ENCODE measurements at regions of chr18 and their contacts with region 1.

Region 1: GRCh38 chr18:12890506-12890905 is 6.5 kb upstream of the PTPN2 start:
- DNase-seq: no peak
- ATAC-seq: no peak
- H3K4me3 Mint-ChIP-seq: no peak overlapping the region
- H3K27ac Mint-ChIP-seq: no peak overlapping the region
- H3K4me1 Mint-ChIP-seq: peaks cover 16% of the 10 kb centered on the region
- H3K27me3 Mint-ChIP-seq: peaks cover 9% of the 10 kb centered on the region
- CTCF ChIP-seq: no peak

Region 2: DNA sequence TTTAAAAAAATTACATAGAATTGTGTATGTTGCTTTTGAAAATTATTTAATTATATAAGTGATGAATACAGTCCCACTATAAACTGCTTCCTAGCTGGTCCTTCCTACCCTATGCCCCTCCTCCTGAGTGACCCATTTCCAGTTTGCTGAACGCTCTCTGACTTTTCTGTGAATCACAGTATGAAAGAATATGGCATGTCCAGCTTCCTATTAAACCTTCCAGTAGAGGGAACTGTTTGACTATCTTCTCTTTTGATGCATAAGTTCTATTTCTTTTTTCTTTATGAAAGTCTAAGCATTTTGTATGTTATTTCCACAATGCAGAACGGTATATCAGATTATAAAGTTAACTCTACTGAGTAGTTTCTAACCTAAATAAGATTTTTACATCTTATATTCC is 146.4 kb before region 1 on chr18:
- CTCF ChIA-PET with region 1: interaction called, 21 read pairs
- POLR2A ChIA-PET with region 1: no interaction called
- intact Hi-C with region 1: no loop called
- DNase-seq: no peak
- ATAC-seq: peak; percentile 53
- H3K4me3 Mint-ChIP-seq: no peak overlapping the region
- H3K27ac Mint-ChIP-seq: no peak overlapping the region
- H3K4me1 Mint-ChIP-seq: no peaks in the 10 kb centered on the region
- H3K27me3 Mint-ChIP-seq: no peaks in the 10 kb centered on the region
- CTCF ChIP-seq: peak; percentile 64

Region 3: GRCh38 chr18:12904012-12904516 is 13.6 kb after region 1 on chr18:
- CTCF ChIA-PET with region 1: interaction called, 20 read pairs
- POLR2A ChIA-PET with region 1: no interaction called
- intact Hi-C with region 1: no loop called
- DNase-seq: peak; percentile 77
- ATAC-seq: peak; percentile 82
- H3K4me3 Mint-ChIP-seq: peak overlapping the region; percentile 48
- H3K27ac Mint-ChIP-seq: peak overlapping the region; percentile 60
- H3K4me1 Mint-ChIP-seq: peaks cover 4% of the 10 kb centered on the region
- H3K27me3 Mint-ChIP-seq: no peaks in the 10 kb centered on the region
- CTCF ChIP-seq: no peak